Transverse colon (tissue), 4 donors: ENCODE measurements at regions of chr12 and their contacts with region 1.

Region 1: GRCh38 chr12:3456809-3457208 is 34.2 kb upstream of the PRMT8 start:
- DNase-seq: no peak
- H3K4me3 ChIP-seq: no peak overlapping the region
- H3K27ac ChIP-seq: no peak overlapping the region
- H3K4me1 ChIP-seq: no peaks in the 10 kb centered on the region
- H3K27me3 ChIP-seq: peaks cover 22% of the 10 kb centered on the region
- CTCF ChIP-seq: no peak
- EP300 ChIP-seq: no peak
- POLR2A ChIP-seq: no peak

Region 2: DNA sequence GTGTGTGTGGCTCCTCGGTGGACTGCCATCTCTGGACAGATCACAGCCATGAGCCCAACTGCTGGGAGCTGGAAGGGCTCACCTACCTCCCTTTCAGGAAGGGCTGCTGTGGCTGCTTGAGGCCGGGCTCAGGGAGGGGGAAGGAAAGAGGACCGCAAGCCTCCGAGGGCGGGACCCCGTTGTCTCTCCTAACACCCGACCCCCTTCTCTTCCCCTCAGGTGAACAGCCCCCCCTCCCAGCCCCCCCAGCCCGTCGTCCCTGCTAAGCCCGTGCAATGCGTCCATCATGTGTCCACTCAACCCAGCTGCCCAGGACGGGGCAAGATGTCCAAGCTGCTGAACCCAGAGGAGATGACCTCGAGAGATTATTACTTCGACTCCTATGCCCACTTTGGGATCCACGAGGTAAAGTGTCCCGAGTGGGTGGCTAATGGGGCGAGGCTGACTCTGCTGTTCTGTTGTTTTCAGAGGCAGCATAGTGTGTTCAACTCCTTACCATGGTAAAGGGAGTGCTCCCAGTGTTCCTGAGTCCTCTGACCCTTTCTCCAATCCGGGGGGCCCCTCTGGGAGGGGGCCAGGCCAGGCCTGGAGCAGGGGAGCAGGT is 83.7 kb after region 1 on chr12:
- in situ Hi-C with region 1: no loop called
- intact Hi-C with region 1: loop called (anchors 1 kb)
- DNase-seq: no peak
- H3K4me3 ChIP-seq: no peak overlapping the region
- H3K27ac ChIP-seq: no peak overlapping the region
- H3K4me1 ChIP-seq: no peaks in the 10 kb centered on the region
- H3K27me3 ChIP-seq: no peaks in the 10 kb centered on the region
- CTCF ChIP-seq: no peak
- EP300 ChIP-seq: no peak
- POLR2A ChIP-seq: no peak

Region 3: GRCh38 chr12:4604684-4605193 is 1147.9 kb after region 1 on chr12:
- in situ Hi-C with region 1: no loop called
- intact Hi-C with region 1: no loop called
- DNase-seq: peak; percentile 86
- H3K4me3 ChIP-seq: peak overlapping the region; percentile 33 to 74 (median 60)
- H3K27ac ChIP-seq: peak overlapping the region; percentile 57 to 81 (median 70)
- H3K4me1 ChIP-seq: peaks cover 0 to 18% (median 2%) of the 10 kb centered on the region in 4 donors
- H3K27me3 ChIP-seq: peaks cover 2% of the 10 kb centered on the region
- CTCF ChIP-seq: peak; percentile 95 to 99 (median 96)
- EP300 ChIP-seq: no peak
- POLR2A ChIP-seq: peak; percentile 23